A673 (cell line): ENCODE measurements at regions of chr13 and their contacts with region 1.

Region 1: DNA sequence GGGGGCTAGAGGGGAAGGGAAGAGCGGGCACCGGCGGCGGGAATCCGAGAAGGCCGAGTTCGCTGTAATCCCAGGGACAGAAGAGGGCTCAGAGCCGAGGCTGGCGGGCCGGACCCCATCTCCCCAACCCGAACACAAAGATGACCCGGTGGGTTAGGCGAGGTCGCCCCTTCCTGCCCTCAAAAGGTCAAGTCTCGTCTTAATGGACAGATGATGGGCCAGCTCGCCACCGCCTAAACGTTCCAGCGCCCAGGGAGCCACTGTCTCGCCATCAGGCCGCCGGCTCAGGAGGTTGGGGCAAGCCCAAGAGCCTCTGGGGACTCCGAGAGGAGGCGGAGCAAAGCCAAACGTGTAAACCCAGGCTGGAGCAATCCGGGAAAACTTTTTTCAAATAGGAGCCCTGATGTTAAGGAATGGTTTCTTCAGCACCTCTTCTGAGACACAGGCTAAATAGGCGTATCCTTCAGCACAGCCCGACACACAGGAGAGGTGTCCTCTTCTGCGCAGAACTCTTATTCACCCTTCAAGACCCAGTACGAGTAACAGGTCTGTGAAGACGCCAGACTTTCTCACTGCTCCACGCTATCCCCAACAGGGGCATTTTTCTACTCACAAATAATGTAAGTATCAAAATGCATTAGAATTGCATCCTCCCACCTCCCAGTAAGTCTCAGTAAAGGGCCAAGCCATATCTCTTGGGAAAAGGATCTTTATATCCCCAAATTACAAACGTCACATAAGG is 6.3 kb upstream of the POU4F1 start:
- DNase-seq: peak; percentile 61
- H3K4me3 ChIP-seq: peak overlapping the region; percentile 53
- H3K27ac ChIP-seq: peak overlapping the region; percentile 60
- H3K4me1 ChIP-seq: peaks cover 25% of the 10 kb centered on the region
- H3K27me3 ChIP-seq: peaks cover 48% of the 10 kb centered on the region
- CTCF ChIP-seq: no peak

Region 2: GRCh38 chr13:78383071-78383484 is 226.6 kb before region 1 on chr13:
- CTCF ChIA-PET with region 1: no interaction called
- POLR2A ChIA-PET with region 1: no interaction called
- intact Hi-C with region 1: loop called (anchors 5 kb)
- DNase-seq: peak; percentile 96
- H3K4me3 ChIP-seq: peak overlapping the region; percentile 29
- H3K27ac ChIP-seq: peak overlapping the region; percentile 74
- H3K4me1 ChIP-seq: peaks cover 33% of the 10 kb centered on the region
- H3K27me3 ChIP-seq: no peaks in the 10 kb centered on the region
- CTCF ChIP-seq: no peak

Region 3: GRCh38 chr13:78787190-78787589 is 177.6 kb after region 1 on chr13:
- CTCF ChIA-PET with region 1: no interaction called
- POLR2A ChIA-PET with region 1: no interaction called
- intact Hi-C with region 1: loop called (anchors 5 kb)
- DNase-seq: peak; percentile 69
- H3K4me3 ChIP-seq: no peak overlapping the region
- H3K27ac ChIP-seq: peak overlapping the region; percentile 92
- H3K4me1 ChIP-seq: peaks cover 69% of the 10 kb centered on the region
- H3K27me3 ChIP-seq: peaks cover 24% of the 10 kb centered on the region
- CTCF ChIP-seq: no peak